ENCODE measurements at regions of chr19 and their contacts with region 1.

Region 1: DNA sequence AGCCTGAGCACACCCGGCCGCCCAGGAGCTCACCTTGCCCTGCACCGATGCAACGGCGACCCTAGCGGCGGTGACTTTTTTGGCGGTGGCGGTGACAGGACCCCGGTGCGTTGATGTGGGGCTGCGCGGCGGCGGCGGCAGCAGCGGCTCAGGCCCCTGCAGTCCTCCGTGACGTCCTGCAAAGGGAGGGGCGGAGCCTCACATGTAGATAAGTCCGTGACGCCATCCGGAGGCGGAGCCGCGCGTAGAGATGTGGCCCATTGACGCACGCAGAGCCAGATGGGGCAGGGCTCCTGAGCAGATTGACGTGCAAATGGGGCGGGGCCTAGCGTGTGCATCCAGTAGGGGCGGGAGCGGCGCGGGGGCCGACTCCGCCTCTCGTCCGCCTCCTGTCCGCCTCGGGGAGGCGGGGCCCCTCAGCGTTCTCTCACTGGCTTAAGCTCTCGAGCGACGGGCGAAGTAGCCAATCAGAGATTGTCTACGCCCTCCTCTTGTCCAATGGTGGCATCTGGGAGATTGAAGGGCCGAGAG is at the start of gene RAB3A:
- DNase-seq: peak; percentile 92 to 100
- ATAC-seq: peak; percentile 93 to 96
- H3K4me3 ChIP-seq: peak within 1 kb of the TSS; percentile 57
- H3K27ac ChIP-seq: peak within 1 kb of the TSS; percentile 78 to 87
- H3K4me1 ChIP-seq: peaks cover 10% of the 10 kb centered on the region; the same call in 2 of the 3 replicates
- CTCF ChIP-seq: no peak
- EP300 ChIP-seq: no peak
- POLR2A ChIP-seq: no peak
- RAD21 ChIP-seq: no peak
- polyA plus RNA-seq, gene RAB3A: 0.39 and 1.0 TPM in 2 replicates

Region 2: DNA sequence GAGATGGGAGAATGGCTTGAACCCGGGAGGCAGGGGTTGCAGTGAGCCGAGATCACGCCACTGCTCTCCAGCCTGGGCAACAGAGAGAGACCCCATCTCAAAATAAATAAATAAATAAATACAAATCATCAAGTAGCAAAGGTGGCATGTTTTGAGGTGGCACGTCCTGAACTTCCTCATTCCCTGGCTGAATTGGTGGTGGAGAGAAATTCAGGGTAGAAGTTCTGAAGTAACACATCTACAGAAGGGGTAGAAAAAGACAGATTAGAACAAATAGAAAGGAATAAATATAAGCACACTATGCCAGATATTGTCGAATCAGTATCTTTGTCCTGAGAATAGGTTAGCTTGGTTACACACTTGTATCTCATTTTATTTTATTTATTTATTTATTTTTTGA is 24.0 kb before region 1 on chr19:
- CTCF ChIA-PET with region 1: no interaction called
- POLR2A ChIA-PET with region 1: no interaction called
- DNase-seq: no peak
- ATAC-seq: no peak
- H3K4me3 ChIP-seq: no peak overlapping the region
- H3K27ac ChIP-seq: no peak overlapping the region
- H3K4me1 ChIP-seq: no peaks in the 10 kb centered on the region
- CTCF ChIP-seq: no peak
- EP300 ChIP-seq: no peak
- POLR2A ChIP-seq: no peak
- RAD21 ChIP-seq: no peak

Region 3: DNA sequence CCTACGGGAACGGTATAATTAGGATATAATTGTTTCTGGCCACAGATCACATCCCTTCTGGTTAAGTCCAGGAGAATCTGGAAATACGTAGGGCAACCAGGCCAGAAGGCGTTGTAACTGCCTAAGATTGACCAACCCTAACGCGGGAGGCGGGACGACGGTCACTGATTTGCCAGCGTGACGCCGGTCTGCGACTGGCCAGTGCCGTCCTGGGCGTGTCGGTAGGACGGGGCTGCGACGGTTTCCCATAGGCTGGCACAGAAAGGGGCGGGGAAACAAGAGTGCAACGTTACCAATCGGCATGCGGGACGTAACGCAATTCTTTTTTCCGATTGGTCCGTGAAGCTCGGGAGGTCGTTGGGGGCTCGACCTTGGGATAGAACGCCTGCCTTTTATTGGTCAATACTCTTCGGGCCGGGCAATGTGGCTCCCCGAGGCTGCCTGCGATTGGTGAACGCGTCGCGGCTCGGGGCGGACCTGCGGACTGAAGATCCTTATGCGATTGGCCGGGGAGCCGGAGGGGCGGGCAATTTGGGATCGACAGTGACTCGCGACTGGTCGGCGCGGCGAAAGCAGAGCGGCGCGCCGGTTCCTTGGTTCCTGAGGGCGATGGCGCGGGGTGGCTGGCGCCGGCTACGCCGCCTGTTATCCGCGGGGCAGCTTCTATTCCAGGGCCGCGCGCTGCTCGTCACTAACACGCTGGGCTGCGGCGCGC is 11.1 kb before region 1 on chr19 and contains the start of gene MPV17L2:
- CTCF ChIA-PET with region 1: interaction called, 18 read pairs
- POLR2A ChIA-PET with region 1: interaction called, 5 read pairs
- DNase-seq: peak; percentile 70 to 99
- ATAC-seq: peak; percentile 92 to 94
- H3K4me3 ChIP-seq: peak within 1 kb of the TSS; percentile 65
- H3K27ac ChIP-seq: peak within 1 kb of the TSS; percentile 62 to 87
- H3K4me1 ChIP-seq: peaks cover 14% of the 10 kb centered on the region; the same call in 2 of the 3 replicates
- CTCF ChIP-seq: no peak
- EP300 ChIP-seq: no peak
- POLR2A ChIP-seq: peak; percentile 61
- RAD21 ChIP-seq: no peak
- polyA plus RNA-seq, gene MPV17L2: 8.3 and 11.4 TPM in 2 replicates

Measured in A549 (cell line).